ENCODE measurements at regions of chr4 and their contacts with region 1.

Region 1: GRCh38 chr4:74675673-74676279 is 118.5 kb downstream of the BTC start:
- DNase-seq: peak in 5 of 9 donors; percentile 26 to 31 (median 30)
- ATAC-seq: peak; percentile 70
- H3K4me3 ChIP-seq: no peak overlapping the region
- H3K4me3 Mint-ChIP-seq: peak overlapping the region in 1 of 10 donors; percentile 1
- H3K27ac ChIP-seq: no peak overlapping the region
- H3K27ac Mint-ChIP-seq: no peak overlapping the region
- H3K4me1 ChIP-seq: no peaks in the 10 kb centered on the region
- H3K4me1 Mint-ChIP-seq: peaks cover 0 to 12% (median 10%) of the 10 kb centered on the region in 7 donors
- H3K27me3 ChIP-seq: no peaks in the 10 kb centered on the region
- H3K27me3 Mint-ChIP-seq: peaks cover 10 to 28% (median 14%) of the 10 kb centered on the region in 5 donors

Region 2: DNA sequence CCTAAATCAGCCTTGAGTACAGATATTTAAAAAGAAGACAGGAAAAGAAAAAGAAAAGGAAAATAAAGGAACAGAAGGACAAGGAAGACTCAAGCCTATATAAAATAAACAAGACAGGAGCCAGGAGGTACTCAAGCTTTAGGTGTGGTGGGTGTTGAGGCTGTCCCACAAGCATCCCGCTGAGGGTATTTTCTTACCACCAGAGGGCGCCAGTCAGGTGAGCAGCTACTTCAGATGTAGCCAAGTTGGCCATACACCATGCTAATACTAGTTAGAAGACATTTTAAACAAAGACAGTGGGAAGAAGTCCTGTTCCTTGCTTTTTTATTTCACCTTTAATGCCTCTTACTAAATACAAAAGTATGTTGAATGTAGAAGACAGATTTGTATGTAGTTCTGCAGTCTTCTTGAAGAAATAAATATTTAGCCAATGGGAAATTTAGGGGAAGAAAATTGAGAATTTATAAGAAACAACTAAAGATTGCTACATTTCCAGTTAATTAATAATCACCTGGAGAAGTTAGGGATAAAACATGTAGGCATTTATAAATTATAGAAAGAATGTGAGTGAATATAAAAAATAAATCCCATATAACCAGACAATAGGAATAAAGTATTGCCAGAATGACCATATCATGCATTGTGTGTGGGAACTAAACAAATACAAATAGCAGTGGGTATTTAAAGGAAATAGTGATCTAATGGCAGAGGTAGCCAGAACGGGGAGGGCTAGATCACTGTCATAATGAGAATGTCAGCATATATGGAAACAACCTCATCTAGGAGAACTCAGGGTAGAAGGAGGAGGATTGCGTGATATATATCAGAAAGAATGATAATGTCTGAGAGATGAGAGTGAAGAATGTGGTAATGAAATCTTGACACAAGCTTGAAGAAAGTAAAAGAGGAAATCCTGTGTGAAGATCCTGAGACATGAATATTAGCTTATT is 446.8 kb before region 1 on chr4:
- CTCF ChIA-PET with region 1: interaction called, 15 read pairs
- POLR2A ChIA-PET with region 1: no interaction called
- intact Hi-C with region 1: loop called (anchors 1 kb)
- DNase-seq: peak; percentile 37 to 79 (median 68)
- ATAC-seq: peak; percentile 76
- H3K4me3 ChIP-seq: no peak overlapping the region
- H3K4me3 Mint-ChIP-seq: no peak overlapping the region
- H3K27ac ChIP-seq: no peak overlapping the region
- H3K27ac Mint-ChIP-seq: peak overlapping the region in 1 of 9 donors; percentile 15
- H3K4me1 ChIP-seq: no peaks in the 10 kb centered on the region
- H3K4me1 Mint-ChIP-seq: peaks cover 0 to 7% (median 0%) of the 10 kb centered on the region in 7 donors
- H3K27me3 ChIP-seq: no peaks in the 10 kb centered on the region
- H3K27me3 Mint-ChIP-seq: no peaks in the 10 kb centered on the region

Region 3: GRCh38 chr4:74370912-74371311 is 304.9 kb before region 1 on chr4:
- CTCF ChIA-PET with region 1: interaction called, 39 read pairs
- POLR2A ChIA-PET with region 1: no interaction called
- intact Hi-C with region 1: loop called (anchors 1 kb)
- DNase-seq: peak in 6 of 9 donors; percentile 12 to 36 (median 22)
- ATAC-seq: peak; percentile 80
- H3K4me3 ChIP-seq: no peak overlapping the region
- H3K4me3 Mint-ChIP-seq: no peak overlapping the region
- H3K27ac ChIP-seq: no peak overlapping the region
- H3K27ac Mint-ChIP-seq: no peak overlapping the region
- H3K4me1 ChIP-seq: no peaks in the 10 kb centered on the region
- H3K4me1 Mint-ChIP-seq: no peaks in the 10 kb centered on the region
- H3K27me3 ChIP-seq: peaks cover 0 to under 1% of the 10 kb centered on the region in 2 donors
- H3K27me3 Mint-ChIP-seq: peaks cover 20 to 43% (median 24%) of the 10 kb centered on the region in 5 donors

Region 4: GRCh38 chr4:74466242-74466641 is 209.5 kb before region 1 on chr4:
- CTCF ChIA-PET with region 1: no interaction called
- POLR2A ChIA-PET with region 1: no interaction called
- intact Hi-C with region 1: no loop called
- DNase-seq: no peak
- ATAC-seq: no peak
- H3K4me3 ChIP-seq: no peak overlapping the region
- H3K4me3 Mint-ChIP-seq: no peak overlapping the region
- H3K27ac ChIP-seq: no peak overlapping the region
- H3K27ac Mint-ChIP-seq: no peak overlapping the region
- H3K4me1 ChIP-seq: no peaks in the 10 kb centered on the region
- H3K4me1 Mint-ChIP-seq: no peaks in the 10 kb centered on the region
- H3K27me3 ChIP-seq: no peaks in the 10 kb centered on the region
- H3K27me3 Mint-ChIP-seq: peaks cover 0 to 11% (median 1%) of the 10 kb centered on the region in 5 donors

Region 5: GRCh38 chr4:74531963-74532794 is 143.6 kb before region 1 on chr4:
- CTCF ChIA-PET with region 1: interaction called, 3 read pairs
- POLR2A ChIA-PET with region 1: no interaction called
- intact Hi-C with region 1: loop called (anchors 1 to 5 kb)
- DNase-seq: peak in 6 of 9 donors; percentile 2 to 34 (median 24)
- ATAC-seq: peak; percentile 74
- H3K4me3 ChIP-seq: no peak overlapping the region
- H3K4me3 Mint-ChIP-seq: no peak overlapping the region
- H3K27ac ChIP-seq: no peak overlapping the region
- H3K27ac Mint-ChIP-seq: no peak overlapping the region
- H3K4me1 ChIP-seq: no peaks in the 10 kb centered on the region
- H3K4me1 Mint-ChIP-seq: peaks cover 0 to 2% (median 0%) of the 10 kb centered on the region in 7 donors
- H3K27me3 ChIP-seq: no peaks in the 10 kb centered on the region
- H3K27me3 Mint-ChIP-seq: peaks cover 0 to 22% (median 11%) of the 10 kb centered on the region in 5 donors

Measured in naive thymus-derived CD4-positive, alpha-beta T cell (primary cell).